CD4-positive, alpha-beta T cell (primary cell): ENCODE measurements at regions of chr1 and their contacts with region 1.

Region 1: DNA sequence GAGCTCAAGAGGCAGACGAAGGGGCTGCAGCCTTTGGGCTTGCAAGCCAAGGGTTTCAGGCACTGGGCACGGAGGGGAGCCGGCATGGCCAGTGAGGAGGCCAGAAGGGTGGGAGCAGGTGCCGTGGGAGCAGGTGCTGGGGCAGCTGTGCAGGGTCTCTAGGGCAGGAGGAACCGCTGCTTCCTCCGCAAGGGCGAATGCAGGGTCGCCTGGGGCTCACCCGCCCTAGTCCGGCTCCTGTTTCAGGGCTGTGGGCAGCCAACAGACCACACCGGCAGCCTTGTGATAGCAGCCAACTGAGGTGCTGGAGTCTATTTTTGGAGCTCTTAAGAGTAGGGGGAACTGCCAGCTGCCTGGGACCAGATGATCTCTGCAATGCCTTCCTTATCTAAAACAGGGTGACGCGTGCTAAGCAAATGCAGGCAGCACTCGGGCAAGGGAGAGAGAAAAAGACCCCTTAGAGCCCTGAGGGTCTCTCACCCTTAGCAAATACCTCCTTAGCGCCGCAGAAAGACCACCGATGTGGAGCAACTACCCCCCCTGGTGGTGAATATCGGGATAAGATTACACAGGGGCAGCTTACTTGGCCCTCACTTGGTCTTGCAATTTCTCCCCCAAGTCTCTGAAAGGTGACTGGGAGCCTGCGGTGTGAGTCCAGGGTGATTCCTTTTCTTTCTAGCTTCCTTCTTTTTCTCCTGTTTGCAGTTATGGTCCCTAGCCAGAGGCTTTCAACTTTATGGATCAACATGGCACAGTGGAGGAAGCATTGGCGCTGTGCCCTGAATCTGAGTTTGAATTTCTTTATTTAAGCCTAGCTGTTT is 20.7 kb upstream of the MAPKAPK2 start:
- DNase-seq: peak; percentile 53 to 85 (median 64)
- ATAC-seq: peak; percentile 91
- H3K4me3 ChIP-seq: no peak overlapping the region
- H3K4me3 Mint-ChIP-seq: no peak overlapping the region
- H3K27ac ChIP-seq: no peak overlapping the region
- H3K27ac Mint-ChIP-seq: no peak overlapping the region
- H3K4me1 ChIP-seq: peaks cover 20% of the 10 kb centered on the region
- H3K4me1 Mint-ChIP-seq: peaks cover 4% of the 10 kb centered on the region
- H3K27me3 ChIP-seq: peaks cover 16 to 20% of the 10 kb centered on the region in 2 experiments
- H3K27me3 Mint-ChIP-seq: peaks cover 31% of the 10 kb centered on the region
- CTCF ChIP-seq: peak; percentile 93

Region 2: DNA sequence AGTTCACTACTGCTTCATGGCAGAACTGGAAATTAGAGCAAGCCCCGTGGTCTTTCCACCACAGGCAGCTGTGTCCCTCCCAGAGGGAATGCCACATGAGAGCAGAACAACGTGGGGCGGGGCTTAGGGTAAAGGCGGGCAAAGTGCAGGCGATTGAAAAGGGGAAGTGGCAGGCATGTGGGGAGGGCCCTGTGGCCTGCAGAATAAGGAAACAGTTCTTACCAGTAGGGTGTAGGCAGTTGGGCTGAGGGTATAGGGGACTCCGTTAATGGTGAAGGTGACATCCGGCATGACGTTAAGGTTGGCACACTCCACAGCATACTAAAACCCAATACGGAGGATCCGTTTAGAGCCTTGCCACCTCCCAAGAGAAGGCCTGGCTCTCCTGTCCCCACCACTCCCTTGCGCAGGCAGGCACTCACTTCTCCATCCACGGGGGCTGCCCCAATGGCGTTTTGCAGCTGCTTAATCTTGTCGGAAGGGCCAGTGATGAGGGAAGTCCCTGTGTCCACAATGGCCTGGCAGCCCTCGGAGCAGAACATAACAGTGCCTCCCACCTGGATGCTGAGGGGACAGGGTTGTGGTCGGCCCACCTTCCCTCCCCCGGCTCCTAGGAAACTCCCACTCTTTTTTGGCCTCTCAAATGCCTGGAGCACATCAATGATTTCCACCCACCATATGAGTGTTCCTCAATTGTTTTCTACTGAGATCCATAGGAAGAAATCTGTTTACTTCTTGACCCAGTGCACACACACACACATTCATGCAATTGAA is 651.8 kb before region 1 on chr1:
- CTCF ChIA-PET with region 1: no interaction called
- POLR2A ChIA-PET with region 1: no interaction called
- intact Hi-C with region 1: no loop called
- DNase-seq: peak in 9 of 14 experiments; percentile 4 to 71 (median 29)
- ATAC-seq: peak; percentile 95
- H3K4me3 ChIP-seq: no peak overlapping the region
- H3K4me3 Mint-ChIP-seq: peak overlapping the region; percentile 44
- H3K27ac ChIP-seq: no peak overlapping the region
- H3K27ac Mint-ChIP-seq: no peak overlapping the region
- H3K4me1 ChIP-seq: peaks cover 8% of the 10 kb centered on the region
- H3K4me1 Mint-ChIP-seq: peaks cover 24% of the 10 kb centered on the region
- H3K27me3 ChIP-seq: no peaks in the 10 kb centered on the region
- H3K27me3 Mint-ChIP-seq: no peaks in the 10 kb centered on the region
- CTCF ChIP-seq: no peak

Region 3: GRCh38 chr1:206461602-206462455 is 202.2 kb before region 1 on chr1:
- CTCF ChIA-PET with region 1: interaction called, 5 read pairs
- POLR2A ChIA-PET with region 1: no interaction called
- intact Hi-C with region 1: loop called (anchors 1 kb)
- DNase-seq: peak; percentile 49 to 86 (median 72)
- ATAC-seq: peak; percentile 87
- H3K4me3 ChIP-seq: no peak overlapping the region
- H3K4me3 Mint-ChIP-seq: no peak overlapping the region
- H3K27ac ChIP-seq: no peak overlapping the region
- H3K27ac Mint-ChIP-seq: peak overlapping the region; percentile 16
- H3K4me1 ChIP-seq: peaks cover 25% of the 10 kb centered on the region
- H3K4me1 Mint-ChIP-seq: peaks cover 17% of the 10 kb centered on the region
- H3K27me3 ChIP-seq: no peaks in the 10 kb centered on the region
- H3K27me3 Mint-ChIP-seq: no peaks in the 10 kb centered on the region
- CTCF ChIP-seq: peak; percentile 80

Region 4: DNA sequence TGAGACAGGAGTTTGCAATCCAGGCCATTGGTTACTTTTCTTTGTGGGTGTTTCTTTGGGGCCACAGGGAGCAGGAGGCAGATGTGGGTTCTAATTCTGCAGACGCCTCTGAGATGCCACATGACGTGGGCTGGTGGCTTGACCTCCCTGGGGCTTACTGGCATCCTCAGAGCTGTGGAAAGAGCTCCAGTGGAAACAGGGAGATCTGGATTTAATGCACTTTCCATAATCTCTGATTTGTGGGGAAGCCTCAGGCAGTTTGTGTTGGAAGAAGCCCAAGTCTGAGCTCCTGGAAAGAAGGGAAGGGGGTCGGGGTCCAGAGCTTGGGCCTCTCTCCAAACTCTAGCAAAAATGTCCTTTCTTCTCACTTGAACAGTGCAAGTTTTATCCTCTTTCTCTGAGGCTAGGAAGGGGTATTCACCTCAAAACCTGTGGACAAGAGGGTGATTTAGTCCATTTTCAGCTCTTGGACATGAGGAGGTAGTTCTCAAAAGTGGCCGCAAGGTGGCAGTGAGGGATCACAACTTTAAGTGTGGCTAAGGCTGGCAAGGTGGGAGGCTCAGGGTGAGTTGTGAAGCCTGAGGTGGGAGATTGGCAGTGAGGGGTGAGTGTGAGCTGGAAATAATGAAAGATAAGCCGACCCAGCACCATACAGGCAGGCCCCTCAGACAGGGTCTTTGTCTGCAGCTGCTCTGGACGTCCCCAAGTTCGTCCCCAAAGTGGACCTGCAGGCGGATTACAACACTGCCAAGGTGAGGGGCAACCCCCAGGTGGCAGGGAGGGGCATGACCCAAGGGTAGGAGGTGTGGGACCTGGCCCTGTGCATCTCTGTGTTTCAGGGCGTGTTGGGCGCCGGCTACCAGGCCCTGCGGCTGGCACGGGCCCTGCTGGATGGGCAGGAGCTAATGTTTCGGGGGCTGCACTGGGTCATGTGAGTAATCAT is 184.6 kb before region 1 on chr1:
- CTCF ChIA-PET with region 1: interaction called, 21 read pairs
- POLR2A ChIA-PET with region 1: interaction called, 6 read pairs
- intact Hi-C with region 1: loop called (anchors 1 to 2 kb)
- DNase-seq: peak; percentile 46 to 84 (median 60)
- ATAC-seq: peak; percentile 93
- H3K4me3 ChIP-seq: no peak overlapping the region
- H3K4me3 Mint-ChIP-seq: no peak overlapping the region
- H3K27ac ChIP-seq: no peak overlapping the region
- H3K27ac Mint-ChIP-seq: peak overlapping the region; percentile 23
- H3K4me1 ChIP-seq: peaks cover 13% of the 10 kb centered on the region
- H3K4me1 Mint-ChIP-seq: peaks cover 15% of the 10 kb centered on the region
- H3K27me3 ChIP-seq: no peaks in the 10 kb centered on the region
- H3K27me3 Mint-ChIP-seq: no peaks in the 10 kb centered on the region
- CTCF ChIP-seq: peak; percentile 73

Region 5: GRCh38 chr1:206489980-206490770 is 173.9 kb before region 1 on chr1:
- CTCF ChIA-PET with region 1: interaction called, 18 read pairs
- POLR2A ChIA-PET with region 1: no interaction called
- intact Hi-C with region 1: loop called (anchors 1 to 2 kb)
- DNase-seq: peak; percentile 53 to 79 (median 63)
- ATAC-seq: peak; percentile 92
- H3K4me3 ChIP-seq: no peak overlapping the region
- H3K4me3 Mint-ChIP-seq: no peak overlapping the region
- H3K27ac ChIP-seq: no peak overlapping the region
- H3K27ac Mint-ChIP-seq: no peak overlapping the region
- H3K4me1 ChIP-seq: peaks cover 4% of the 10 kb centered on the region
- H3K4me1 Mint-ChIP-seq: no peaks in the 10 kb centered on the region
- H3K27me3 ChIP-seq: no peaks in the 10 kb centered on the region
- H3K27me3 Mint-ChIP-seq: no peaks in the 10 kb centered on the region
- CTCF ChIP-seq: peak; percentile 68

Region 6: GRCh38 chr1:206606856-206607255 is 57.2 kb before region 1 on chr1:
- CTCF ChIA-PET with region 1: interaction called, 16 read pairs
- POLR2A ChIA-PET with region 1: no interaction called
- intact Hi-C with region 1: loop called (anchors 1 kb)
- DNase-seq: peak in 2 of 14 experiments; percentile 30 to 42
- ATAC-seq: peak; percentile 69
- H3K4me3 ChIP-seq: no peak overlapping the region
- H3K4me3 Mint-ChIP-seq: no peak overlapping the region
- H3K27ac ChIP-seq: no peak overlapping the region
- H3K27ac Mint-ChIP-seq: no peak overlapping the region
- H3K4me1 ChIP-seq: peaks cover 9% of the 10 kb centered on the region
- H3K4me1 Mint-ChIP-seq: peaks cover 16% of the 10 kb centered on the region
- H3K27me3 ChIP-seq: no peaks in the 10 kb centered on the region
- H3K27me3 Mint-ChIP-seq: no peaks in the 10 kb centered on the region
- CTCF ChIP-seq: no peak

Region 7: DNA sequence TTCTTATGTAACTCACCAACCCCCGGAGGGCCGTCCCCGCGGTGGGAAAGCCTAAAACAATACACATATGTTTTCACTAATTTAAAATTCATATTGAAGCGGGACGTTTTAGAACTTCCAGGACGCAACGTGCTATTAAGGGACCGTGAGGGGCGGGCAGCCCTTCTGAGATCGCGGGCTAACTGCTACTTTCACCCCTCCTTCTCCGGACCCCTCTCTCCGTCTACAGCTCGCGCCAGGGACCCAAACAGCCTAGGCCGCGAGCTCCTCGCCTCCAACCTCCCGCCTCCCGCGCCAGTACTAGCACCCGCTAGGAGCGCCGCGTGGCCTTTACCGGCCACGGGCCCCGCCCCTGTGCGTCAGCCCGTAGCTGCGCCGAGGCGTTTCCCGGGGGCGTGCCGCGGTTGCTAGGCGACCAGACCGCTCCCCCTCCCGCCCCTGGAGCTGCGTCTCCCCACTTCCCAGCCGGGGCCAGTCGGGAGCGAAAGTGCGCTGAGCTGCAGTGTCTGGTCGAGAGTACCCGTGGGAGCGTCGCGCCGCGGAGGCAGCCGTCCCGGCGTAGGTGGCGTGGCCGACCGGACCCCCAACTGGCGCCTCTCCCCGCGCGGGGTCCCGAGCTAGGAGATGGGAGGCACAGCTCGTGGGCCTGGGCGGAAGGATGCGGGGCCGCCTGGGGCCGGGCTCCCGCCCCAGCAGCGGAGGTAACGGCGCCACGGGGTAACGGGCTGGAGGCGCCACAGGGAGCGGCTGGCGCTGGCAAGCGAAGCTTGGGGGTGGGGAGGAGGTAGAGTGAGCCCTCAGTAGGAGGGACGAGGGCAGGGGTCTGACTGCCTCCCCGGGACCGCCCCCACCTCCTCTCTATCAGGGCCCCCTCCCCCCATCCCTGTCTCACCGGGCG is 28.7 kb before region 1 on chr1 and contains the start of gene DYRK3:
- CTCF ChIA-PET with region 1: interaction called, 42 read pairs
- POLR2A ChIA-PET with region 1: interaction called, 3 read pairs
- intact Hi-C with region 1: loop called (anchors 1 kb)
- DNase-seq: peak; percentile 74 to 95 (median 85)
- ATAC-seq: peak; percentile 93
- H3K4me3 ChIP-seq: peak within 1 kb of the TSS; percentile 64
- H3K4me3 Mint-ChIP-seq: peak within 1 kb of the TSS; percentile 92
- H3K27ac ChIP-seq: peak within 1 kb of the TSS in 1 of 2 donors; percentile 52
- H3K27ac Mint-ChIP-seq: peak within 1 kb of the TSS; percentile 66
- H3K4me1 ChIP-seq: peaks cover 20% of the 10 kb centered on the region
- H3K4me1 Mint-ChIP-seq: peaks cover 18% of the 10 kb centered on the region
- H3K27me3 ChIP-seq: peaks cover 0 to 14% of the 10 kb centered on the region in 2 experiments
- H3K27me3 Mint-ChIP-seq: no peaks in the 10 kb centered on the region
- CTCF ChIP-seq: no peak
- total RNA-seq, gene DYRK3: 1.6 to 1.7 TPM

Region 8: GRCh38 chr1:206784471-206784903 is 120.4 kb after region 1 on chr1:
- CTCF ChIA-PET with region 1: no interaction called
- POLR2A ChIA-PET with region 1: no interaction called
- intact Hi-C with region 1: no loop called
- DNase-seq: peak; percentile 47 to 86 (median 66)
- ATAC-seq: peak; percentile 92
- H3K4me3 ChIP-seq: peak overlapping the region; percentile 15
- H3K4me3 Mint-ChIP-seq: peak overlapping the region; percentile 40
- H3K27ac ChIP-seq: peak overlapping the region in 1 of 2 donors; percentile 49
- H3K27ac Mint-ChIP-seq: peak overlapping the region; percentile 74
- H3K4me1 ChIP-seq: peaks cover 45% of the 10 kb centered on the region
- H3K4me1 Mint-ChIP-seq: peaks cover 60% of the 10 kb centered on the region
- H3K27me3 ChIP-seq: no peaks in the 10 kb centered on the region
- H3K27me3 Mint-ChIP-seq: no peaks in the 10 kb centered on the region
- CTCF ChIP-seq: no peak